ENCODE measurements at regions of chr2 and their contacts with region 1.

Region 1: GRCh38 chr2:45353879-45354278 is 257.2 kb downstream of the SRBD1 start:
- DNase-seq: peak; percentile 98
- ATAC-seq: peak; percentile 96
- H3K4me3 ChIP-seq: no peak overlapping the region
- H3K27ac ChIP-seq: peak overlapping the region; percentile 95
- H3K4me1 ChIP-seq: peaks cover 30% of the 10 kb centered on the region
- H3K27me3 ChIP-seq: no peaks in the 10 kb centered on the region
- CTCF ChIP-seq: no peak

Region 2: DNA sequence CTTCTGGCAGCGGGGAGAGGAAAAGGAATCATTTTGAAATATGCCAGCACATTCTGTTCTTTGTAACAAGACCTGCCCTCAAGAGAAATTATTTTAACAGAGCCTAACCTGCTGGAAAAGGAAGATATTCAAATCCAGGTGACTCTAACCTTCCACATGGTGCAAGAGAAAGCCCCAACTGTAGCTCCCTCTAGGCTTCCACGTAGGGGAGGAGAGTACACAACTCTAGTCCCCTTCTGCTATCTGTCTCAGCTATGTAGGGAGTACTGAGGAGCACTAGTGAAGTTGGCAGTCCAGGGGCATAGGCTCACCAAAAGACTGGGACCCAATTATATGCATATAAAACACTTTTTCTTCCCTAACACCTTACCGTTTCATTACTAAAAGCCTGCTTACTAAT is 494.5 kb before region 1 on chr2:
- CTCF ChIA-PET with region 1: no interaction called
- POLR2A ChIA-PET with region 1: no interaction called
- intact Hi-C with region 1: no loop called
- DNase-seq: no peak
- ATAC-seq: no peak
- H3K4me3 ChIP-seq: no peak overlapping the region
- H3K27ac ChIP-seq: no peak overlapping the region
- H3K4me1 ChIP-seq: no peaks in the 10 kb centered on the region
- H3K27me3 ChIP-seq: peaks cover 63% of the 10 kb centered on the region
- CTCF ChIP-seq: no peak

Region 3: DNA sequence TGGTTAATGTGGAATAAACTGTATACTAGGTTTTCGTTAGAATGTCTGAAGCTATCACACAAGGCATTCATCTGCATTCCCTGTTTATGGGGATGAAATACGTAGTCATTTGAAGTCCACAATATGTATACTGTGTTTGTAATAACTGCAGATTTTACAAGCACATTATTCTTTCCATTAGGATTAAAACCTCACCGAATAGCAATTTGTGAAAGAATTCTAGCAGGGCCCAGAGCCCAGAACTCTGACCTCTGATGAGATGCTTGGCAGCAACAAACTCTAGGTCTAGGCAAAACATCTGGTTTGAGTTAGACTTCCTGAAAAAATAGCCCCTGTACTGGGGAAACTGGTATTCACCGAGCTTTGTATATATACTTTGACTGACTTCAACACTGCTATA is 99.0 kb after region 1 on chr2:
- CTCF ChIA-PET with region 1: no interaction called
- POLR2A ChIA-PET with region 1: interaction called, 10 read pairs
- intact Hi-C with region 1: no loop called
- DNase-seq: no peak
- ATAC-seq: no peak
- H3K4me3 ChIP-seq: no peak overlapping the region
- H3K27ac ChIP-seq: no peak overlapping the region
- H3K4me1 ChIP-seq: no peaks in the 10 kb centered on the region
- H3K27me3 ChIP-seq: no peaks in the 10 kb centered on the region
- CTCF ChIP-seq: no peak